Right lobe of liver (tissue), 6 donors: ENCODE measurements at regions of chr3 and their contacts with region 1.

Region 1: DNA sequence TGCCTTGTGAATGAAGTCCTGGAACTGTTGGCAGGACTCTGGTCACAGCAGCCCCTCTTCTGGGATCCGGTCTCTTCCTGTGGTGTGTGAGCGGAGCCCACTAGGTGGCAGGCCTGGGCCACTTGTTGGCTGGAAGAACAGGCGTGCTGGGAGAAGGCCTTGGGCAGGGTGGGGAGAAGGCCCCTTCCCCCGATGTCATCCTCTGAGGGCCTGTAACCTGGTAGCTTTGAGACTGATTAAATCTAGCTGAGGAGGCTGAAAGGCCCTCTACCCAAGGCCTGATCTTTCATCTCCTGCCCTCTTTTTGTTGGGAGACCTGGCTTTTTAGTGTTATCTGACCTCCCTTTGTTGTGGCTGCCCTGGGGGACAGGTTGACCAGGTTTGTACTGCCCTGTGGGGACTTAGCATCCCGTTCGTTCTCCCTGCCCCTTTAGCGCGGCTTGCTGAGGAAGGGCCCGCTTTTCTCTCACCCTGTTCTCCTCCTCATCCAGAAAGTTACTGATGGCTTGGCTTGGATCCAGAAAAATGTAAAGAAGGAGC is 48.3 kb downstream of the CHCHD6 start:
- DNase-seq: peak; percentile 70 to 73 (median 73)
- ATAC-seq: peak; percentile 87 to 97 (median 92)
- H3K4me3 ChIP-seq: no peak overlapping the region
- H3K27ac ChIP-seq: no peak overlapping the region
- H3K4me1 ChIP-seq: no peaks in the 10 kb centered on the region
- H3K27me3 ChIP-seq: no peaks in the 10 kb centered on the region
- CTCF ChIP-seq: peak; percentile 75 to 81 (median 77)
- POLR2A ChIP-seq: no peak

Region 2: GRCh38 chr3:126961191-126961790 is 208.9 kb after region 1 on chr3:
- intact Hi-C with region 1: loop called in 1 of 2 experiments (anchors 10 kb)
- DNase-seq: peak in 2 of 3 donors; percentile 28 to 55
- ATAC-seq: peak; percentile 57 to 71 (median 66)
- H3K4me3 ChIP-seq: no peak overlapping the region
- H3K27ac ChIP-seq: no peak overlapping the region
- H3K4me1 ChIP-seq: no peaks in the 10 kb centered on the region
- H3K27me3 ChIP-seq: no peaks in the 10 kb centered on the region
- CTCF ChIP-seq: no peak
- POLR2A ChIP-seq: no peak

Region 3: GRCh38 chr3:127455541-127456450 is 703.4 kb after region 1 on chr3:
- intact Hi-C with region 1: loop called in 1 of 2 experiments (anchors 10 kb)
- DNase-seq: peak; percentile 58 to 73 (median 64)
- ATAC-seq: peak; percentile 83 to 94 (median 88)
- H3K4me3 ChIP-seq: no peak overlapping the region
- H3K27ac ChIP-seq: no peak overlapping the region
- H3K4me1 ChIP-seq: peaks cover 0 to 11% (median 3%) of the 10 kb centered on the region in 4 donors
- H3K27me3 ChIP-seq: peaks cover 0 to 25% of the 10 kb centered on the region in 2 donors
- CTCF ChIP-seq: peak; percentile 78 to 92 (median 88)
- POLR2A ChIP-seq: no peak

Region 4: DNA sequence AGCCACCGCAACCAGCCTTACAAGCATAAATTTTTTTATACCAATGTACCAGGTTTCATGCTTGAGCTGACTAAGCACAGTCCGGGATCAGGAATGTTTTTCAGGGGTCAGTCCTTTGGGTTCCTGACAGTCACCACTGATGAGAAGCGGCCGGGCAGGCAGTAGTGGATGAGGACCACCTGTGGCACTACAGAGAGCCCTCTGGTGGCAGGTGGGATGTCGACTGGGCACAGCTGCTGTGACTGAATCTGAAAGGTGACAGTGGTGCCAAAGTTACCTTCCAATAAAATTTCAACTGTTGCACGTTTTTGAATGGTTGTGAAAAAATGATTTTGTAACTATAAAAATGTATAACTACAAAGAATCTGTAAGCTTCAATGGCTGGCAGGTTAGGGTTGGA is 804.2 kb after region 1 on chr3:
- intact Hi-C with region 1: loop called (anchors 5 to 10 kb)
- DNase-seq: no peak
- ATAC-seq: no peak
- H3K4me3 ChIP-seq: no peak overlapping the region
- H3K27ac ChIP-seq: no peak overlapping the region
- H3K4me1 ChIP-seq: no peaks in the 10 kb centered on the region
- H3K27me3 ChIP-seq: no peaks in the 10 kb centered on the region
- CTCF ChIP-seq: peak in 1 of 4 donors; percentile 19
- POLR2A ChIP-seq: no peak